Activated CD4-positive, alpha-beta T cell treated with anti-CD3 and anti-CD28 coated beads for 36 hours (primary cell): ENCODE measurements at regions of chr19 and their contacts with region 1.

Region 1: GRCh38 chr19:49546825-49547565 is 19.2 kb downstream of the RCN3 start:
- DNase-seq: peak; percentile 76
- ATAC-seq: peak; percentile 76
- H3K4me3 Mint-ChIP-seq: peak overlapping the region; percentile 59
- H3K27ac Mint-ChIP-seq: peak overlapping the region; percentile 75
- H3K4me1 Mint-ChIP-seq: peaks cover 45% of the 10 kb centered on the region
- H3K27me3 Mint-ChIP-seq: no peaks in the 10 kb centered on the region

Region 2: GRCh38 chr19:49502866-49503581 is 44.0 kb before region 1 on chr19:
- CTCF ChIA-PET with region 1: interaction called, 63 read pairs
- POLR2A ChIA-PET with region 1: interaction called, 5 read pairs
- intact Hi-C with region 1: loop called (anchors 1 kb)
- DNase-seq: peak; percentile 65
- ATAC-seq: peak; percentile 28
- H3K4me3 Mint-ChIP-seq: no peak overlapping the region
- H3K27ac Mint-ChIP-seq: no peak overlapping the region
- H3K4me1 Mint-ChIP-seq: peaks cover 44% of the 10 kb centered on the region
- H3K27me3 Mint-ChIP-seq: no peaks in the 10 kb centered on the region

Region 3: DNA sequence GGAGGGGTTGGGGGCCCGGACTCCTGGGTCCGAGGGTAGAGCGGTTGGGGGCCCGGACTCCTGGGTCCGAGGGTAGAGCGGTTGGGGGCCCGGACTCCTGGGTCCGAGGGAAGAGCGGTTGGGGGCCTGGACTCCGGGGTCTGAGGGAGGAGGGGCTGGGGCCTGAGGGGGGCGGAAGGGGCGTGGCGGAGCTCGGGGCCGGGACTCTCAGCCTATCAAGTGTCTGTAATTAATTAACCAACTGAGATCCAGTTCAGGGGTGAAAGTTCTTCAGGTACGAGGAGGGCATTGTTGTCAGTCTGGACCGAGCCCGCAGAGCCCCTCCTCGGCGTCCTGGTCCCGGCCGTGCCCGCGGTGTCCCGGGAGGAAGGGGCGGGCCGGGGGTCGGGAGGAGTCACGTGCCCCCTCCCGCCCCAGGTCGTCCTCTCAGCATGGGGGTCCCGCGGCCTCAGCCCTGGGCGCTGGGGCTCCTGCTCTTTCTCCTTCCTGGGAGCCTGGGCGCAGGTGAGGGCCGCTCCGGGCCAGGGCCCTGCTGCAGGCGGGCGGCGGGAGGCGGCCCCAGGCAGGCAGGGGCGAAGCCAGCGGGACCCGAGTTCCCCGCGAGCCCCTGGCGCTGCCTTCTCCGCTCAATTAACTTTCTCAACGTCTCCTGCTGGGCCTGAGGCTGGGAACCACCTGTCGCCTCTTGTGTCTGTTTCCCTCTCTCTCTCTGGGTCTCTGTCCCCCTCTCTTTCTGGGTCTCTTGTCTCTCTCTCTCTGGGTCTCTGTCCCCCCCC is 33.8 kb before region 1 on chr19:
- CTCF ChIA-PET with region 1: interaction called, 63 read pairs
- POLR2A ChIA-PET with region 1: no interaction called
- intact Hi-C with region 1: no loop called
- DNase-seq: peak; percentile 55
- ATAC-seq: peak; percentile 77
- H3K4me3 Mint-ChIP-seq: peak overlapping the region; percentile 76
- H3K27ac Mint-ChIP-seq: peak overlapping the region; percentile 67
- H3K4me1 Mint-ChIP-seq: peaks cover 36% of the 10 kb centered on the region
- H3K27me3 Mint-ChIP-seq: no peaks in the 10 kb centered on the region

Region 4: GRCh38 chr19:49528211-49528771 is 18.7 kb before region 1 on chr19:
- CTCF ChIA-PET with region 1: interaction called, 20 read pairs
- POLR2A ChIA-PET with region 1: interaction called, 7 read pairs
- intact Hi-C with region 1: no loop called
- DNase-seq: peak; percentile 29
- ATAC-seq: no peak
- H3K4me3 Mint-ChIP-seq: peak overlapping the region; percentile 73
- H3K27ac Mint-ChIP-seq: no peak overlapping the region
- H3K4me1 Mint-ChIP-seq: peaks cover 18% of the 10 kb centered on the region
- H3K27me3 Mint-ChIP-seq: no peaks in the 10 kb centered on the region

Region 5: DNA sequence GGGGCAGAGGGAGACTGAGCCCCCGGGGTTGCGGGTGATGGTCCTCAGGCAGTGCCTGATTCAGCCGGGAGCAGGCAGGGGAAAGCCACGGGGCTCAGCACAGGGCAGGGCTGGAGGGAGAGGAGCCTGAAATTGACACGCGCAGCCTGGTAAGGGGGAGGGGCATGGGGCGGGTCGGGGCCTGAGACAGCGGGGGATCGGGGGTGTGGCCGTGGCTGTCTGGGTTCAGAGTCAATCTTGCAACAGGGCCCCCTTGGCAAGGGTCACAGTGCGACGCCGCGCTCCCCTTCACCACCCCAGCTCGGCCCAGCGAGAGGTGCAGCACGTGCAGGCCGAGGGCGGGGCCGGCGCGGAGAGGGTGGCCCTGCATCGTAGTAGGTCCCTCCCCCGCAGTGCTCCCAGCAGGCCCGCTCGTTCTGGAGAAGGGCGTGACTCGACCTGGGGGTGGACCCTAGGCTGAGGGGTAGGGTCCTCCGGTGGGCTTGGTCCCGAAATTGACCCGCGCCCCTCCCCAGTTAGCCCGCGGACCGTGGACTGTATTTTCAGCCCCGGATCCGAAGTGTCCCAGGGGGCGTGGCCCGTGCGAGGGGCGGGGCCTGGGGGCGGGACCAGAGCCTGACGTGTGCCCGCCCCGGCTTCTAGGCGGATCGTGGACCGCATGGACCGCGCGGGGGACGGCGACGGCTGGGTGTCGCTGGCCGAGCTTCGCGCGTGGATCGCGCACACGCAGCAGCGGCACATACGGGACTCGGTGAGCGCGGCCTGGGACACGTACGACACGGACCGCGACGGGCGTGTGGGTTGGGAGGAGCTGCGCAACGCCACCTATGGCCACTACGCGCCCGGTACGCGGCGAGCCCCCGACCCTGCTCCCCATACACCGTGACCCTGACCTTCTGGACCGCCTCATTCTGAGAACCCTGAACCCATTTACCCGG is 13.2 kb before region 1 on chr19:
- CTCF ChIA-PET with region 1: interaction called, 25 read pairs
- POLR2A ChIA-PET with region 1: interaction called, 3 read pairs
- intact Hi-C with region 1: no loop called
- DNase-seq: peak; percentile 90
- ATAC-seq: peak; percentile 87
- H3K4me3 Mint-ChIP-seq: peak overlapping the region; percentile 78
- H3K27ac Mint-ChIP-seq: peak overlapping the region; percentile 71
- H3K4me1 Mint-ChIP-seq: peaks cover 22% of the 10 kb centered on the region
- H3K27me3 Mint-ChIP-seq: peaks cover 3% of the 10 kb centered on the region

Region 6: GRCh38 chr19:49570138-49570856 is 23.3 kb after region 1 on chr19:
- CTCF ChIA-PET with region 1: interaction called, 161 read pairs
- POLR2A ChIA-PET with region 1: interaction called, 3 read pairs
- intact Hi-C with region 1: loop called (anchors 1 kb)
- DNase-seq: peak; percentile 82
- ATAC-seq: peak; percentile 54
- H3K4me3 Mint-ChIP-seq: peak overlapping the region; percentile 16
- H3K27ac Mint-ChIP-seq: peak overlapping the region; percentile 76
- H3K4me1 Mint-ChIP-seq: peaks cover 56% of the 10 kb centered on the region
- H3K27me3 Mint-ChIP-seq: no peaks in the 10 kb centered on the region

Region 7: DNA sequence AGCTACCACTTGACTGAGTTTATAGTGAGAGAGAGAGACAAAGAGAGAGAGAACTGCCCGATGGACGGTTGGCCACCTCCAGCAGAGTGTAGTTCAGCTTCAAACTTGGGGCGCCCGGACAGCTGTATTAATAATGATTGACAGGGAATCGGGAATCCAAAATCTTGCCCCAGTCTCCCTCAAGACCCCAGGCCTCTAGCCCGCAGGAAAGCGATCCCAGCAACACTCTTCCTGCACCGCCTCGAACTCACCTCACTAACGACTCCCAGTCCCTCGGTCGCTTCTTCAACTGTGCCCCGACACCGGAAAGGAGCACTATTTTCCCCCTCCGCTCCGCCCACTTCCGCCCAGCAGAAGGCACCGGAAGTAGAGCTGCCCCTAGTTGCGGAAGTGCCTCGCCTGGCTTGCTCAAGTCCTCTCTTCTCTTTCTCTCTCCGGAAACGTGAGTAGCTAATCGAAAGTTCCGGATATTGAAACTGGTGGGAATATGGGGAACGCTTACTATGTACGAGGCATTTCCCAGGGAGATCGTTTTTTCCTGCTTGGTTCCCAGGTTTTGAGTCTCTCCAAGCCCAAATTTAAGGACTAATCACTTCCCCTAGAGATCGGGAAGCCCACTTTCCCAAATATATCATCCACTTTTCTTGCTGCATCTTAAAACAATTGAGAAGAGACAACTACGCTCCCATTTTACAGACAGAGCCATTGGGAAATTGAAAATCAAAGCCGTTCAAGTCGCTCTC is 33.4 kb after region 1 on chr19 and contains the start of gene NOSIP:
- CTCF ChIA-PET with region 1: interaction called, 10 read pairs
- POLR2A ChIA-PET with region 1: no interaction called
- intact Hi-C with region 1: no loop called
- DNase-seq: peak; percentile 98
- ATAC-seq: peak; percentile 97
- H3K4me3 Mint-ChIP-seq: peak within 1 kb of the TSS; percentile 92
- H3K27ac Mint-ChIP-seq: peak within 1 kb of the TSS; percentile 89
- H3K4me1 Mint-ChIP-seq: peaks cover 34% of the 10 kb centered on the region
- H3K27me3 Mint-ChIP-seq: no peaks in the 10 kb centered on the region
- total RNA-seq, gene NOSIP: 71.4 to 73.1 TPM